ENCODE measurements at regions of chr6 and their contacts with region 1.

Region 1: DNA sequence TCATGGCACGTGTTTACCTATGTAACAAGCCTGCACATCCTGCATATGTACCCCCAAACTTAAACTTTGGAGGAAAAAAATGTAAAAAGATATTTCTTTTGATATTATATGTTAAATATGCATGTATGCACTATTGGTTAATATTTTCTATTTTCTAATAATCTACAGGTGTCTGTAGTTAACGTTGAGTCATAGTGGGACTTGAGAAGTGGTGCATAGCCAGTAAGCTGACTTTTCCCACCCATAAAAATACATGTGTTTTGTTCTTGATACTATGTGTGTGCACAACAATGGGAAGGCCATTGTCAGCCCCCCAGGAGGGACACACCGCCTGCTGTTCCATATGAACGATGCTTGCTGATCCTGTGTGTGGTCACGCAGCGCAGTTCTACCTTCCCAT is 49.1 kb downstream of the FAM120B start:
- DNase-seq: no peak
- H3K4me3 ChIP-seq: no peak overlapping the region
- H3K4me3 Mint-ChIP-seq: no peak overlapping the region
- H3K27ac ChIP-seq: no peak overlapping the region
- H3K27ac Mint-ChIP-seq: peak overlapping the region in 1 of 7 donors; percentile 60
- H3K4me1 ChIP-seq: no peaks in the 10 kb centered on the region
- H3K4me1 Mint-ChIP-seq: peaks cover 0 to 9% (median 4%) of the 10 kb centered on the region in 4 donors
- H3K27me3 ChIP-seq: no peaks in the 10 kb centered on the region
- H3K27me3 Mint-ChIP-seq: no peaks in the 10 kb centered on the region

Region 2: GRCh38 chr6:170329321-170329720 is 26.3 kb before region 1 on chr6:
- CTCF ChIA-PET with region 1: no interaction called
- POLR2A ChIA-PET with region 1: no interaction called
- intact Hi-C with region 1: loop called (anchors 1 kb)
- DNase-seq: no peak
- H3K4me3 ChIP-seq: no peak overlapping the region
- H3K4me3 Mint-ChIP-seq: no peak overlapping the region
- H3K27ac ChIP-seq: no peak overlapping the region
- H3K27ac Mint-ChIP-seq: peak overlapping the region in 1 of 7 donors; percentile 80
- H3K4me1 ChIP-seq: no peaks in the 10 kb centered on the region
- H3K4me1 Mint-ChIP-seq: peaks cover 0 to 14% (median 11%) of the 10 kb centered on the region in 4 donors
- H3K27me3 ChIP-seq: no peaks in the 10 kb centered on the region
- H3K27me3 Mint-ChIP-seq: no peaks in the 10 kb centered on the region

Measured in CD4-positive, alpha-beta memory T cell (primary cell).